ENCODE measurements at regions of chr1 and their contacts with region 1.

Region 1: DNA sequence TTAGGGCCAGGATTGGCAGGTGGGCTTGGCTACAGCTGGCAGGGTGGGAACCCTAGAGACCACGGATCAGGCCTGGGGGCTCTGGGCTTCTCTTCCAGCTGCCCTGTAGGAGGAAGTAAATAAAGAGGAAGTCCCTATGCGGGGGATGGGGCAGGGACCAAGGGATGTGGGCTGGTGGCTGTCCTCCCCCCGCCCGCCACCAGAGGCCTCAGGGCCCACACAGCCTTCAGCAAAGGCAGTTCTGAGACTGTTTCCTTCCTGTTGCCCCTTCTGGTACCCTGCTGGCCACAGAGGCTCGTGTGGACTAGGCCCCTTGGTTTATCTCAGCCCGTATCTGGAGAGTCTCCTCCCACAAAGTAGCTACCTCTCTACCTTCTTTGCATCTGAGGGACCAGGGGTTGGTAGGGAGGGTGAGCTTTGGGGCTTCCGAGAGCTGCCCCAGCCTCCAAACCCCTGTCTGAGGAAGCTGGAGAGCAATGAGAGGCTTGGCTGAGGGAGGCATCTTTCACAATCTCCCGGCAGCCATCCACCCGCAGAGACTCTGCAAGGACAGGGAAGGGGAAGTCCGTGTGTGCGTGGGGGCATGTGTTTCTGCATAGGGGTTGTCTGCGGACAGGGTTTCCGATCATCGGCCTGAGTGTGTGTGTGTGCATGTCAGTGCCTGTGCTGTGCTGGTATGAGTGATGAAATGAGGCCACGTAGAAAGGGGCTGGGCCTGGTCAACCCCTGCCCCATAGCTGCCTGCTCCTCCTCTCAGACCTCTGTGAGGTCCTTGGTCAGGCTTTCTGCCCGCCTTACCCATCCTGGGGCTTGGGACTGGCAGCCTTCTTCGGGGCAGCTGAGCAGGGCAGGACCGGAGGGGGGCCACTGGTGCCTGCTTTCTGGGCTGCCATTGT is 12.5 kb downstream of the RPS6KA1 start:
- DNase-seq: peak; percentile 73
- ATAC-seq: peak; percentile 93
- H3K4me3 Mint-ChIP-seq: no peak overlapping the region
- H3K27ac Mint-ChIP-seq: peak overlapping the region; percentile 40
- H3K4me1 Mint-ChIP-seq: peaks cover 26% of the 10 kb centered on the region
- H3K27me3 Mint-ChIP-seq: no peaks in the 10 kb centered on the region
- CTCF ChIP-seq: no peak

Region 2: GRCh38 chr1:26472901-26473845 is 68.9 kb before region 1 on chr1:
- CTCF ChIA-PET with region 1: interaction called, 12 read pairs
- POLR2A ChIA-PET with region 1: no interaction called
- DNase-seq: peak; percentile 96
- ATAC-seq: peak; percentile 59
- H3K4me3 Mint-ChIP-seq: peak overlapping the region; percentile 89
- H3K27ac Mint-ChIP-seq: peak overlapping the region; percentile 86
- H3K4me1 Mint-ChIP-seq: peaks cover 31% of the 10 kb centered on the region
- H3K27me3 Mint-ChIP-seq: no peaks in the 10 kb centered on the region; the same call in 1 of the 2 replicates
- CTCF ChIP-seq: no peak

Region 3: DNA sequence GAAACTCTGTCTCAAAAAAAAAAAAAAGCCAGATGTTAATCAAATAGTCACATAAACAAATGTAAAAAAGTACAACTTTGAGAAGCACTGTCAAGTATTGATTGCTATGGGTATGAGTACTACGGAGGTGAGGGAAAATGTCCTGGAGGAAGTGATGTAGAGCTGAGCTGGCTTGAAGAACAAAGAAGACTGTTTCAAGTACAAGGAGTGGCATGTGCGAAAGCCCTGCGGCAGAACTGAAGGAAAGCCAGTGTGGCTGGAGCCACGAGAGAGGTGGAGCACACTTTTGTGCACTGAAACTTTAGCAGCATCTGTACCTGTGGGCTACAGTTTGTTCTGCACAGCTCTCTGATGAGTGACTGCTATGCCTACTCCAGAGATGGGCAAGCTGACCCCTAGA is 17.9 kb before region 1 on chr1:
- CTCF ChIA-PET with region 1: interaction called, 85 read pairs
- POLR2A ChIA-PET with region 1: interaction called, 3 read pairs
- DNase-seq: no peak
- ATAC-seq: no peak
- H3K4me3 Mint-ChIP-seq: no peak overlapping the region
- H3K27ac Mint-ChIP-seq: no peak overlapping the region
- H3K4me1 Mint-ChIP-seq: peaks cover 12% of the 10 kb centered on the region
- H3K27me3 Mint-ChIP-seq: peaks cover 19% of the 10 kb centered on the region
- CTCF ChIP-seq: no peak

Region 4: DNA sequence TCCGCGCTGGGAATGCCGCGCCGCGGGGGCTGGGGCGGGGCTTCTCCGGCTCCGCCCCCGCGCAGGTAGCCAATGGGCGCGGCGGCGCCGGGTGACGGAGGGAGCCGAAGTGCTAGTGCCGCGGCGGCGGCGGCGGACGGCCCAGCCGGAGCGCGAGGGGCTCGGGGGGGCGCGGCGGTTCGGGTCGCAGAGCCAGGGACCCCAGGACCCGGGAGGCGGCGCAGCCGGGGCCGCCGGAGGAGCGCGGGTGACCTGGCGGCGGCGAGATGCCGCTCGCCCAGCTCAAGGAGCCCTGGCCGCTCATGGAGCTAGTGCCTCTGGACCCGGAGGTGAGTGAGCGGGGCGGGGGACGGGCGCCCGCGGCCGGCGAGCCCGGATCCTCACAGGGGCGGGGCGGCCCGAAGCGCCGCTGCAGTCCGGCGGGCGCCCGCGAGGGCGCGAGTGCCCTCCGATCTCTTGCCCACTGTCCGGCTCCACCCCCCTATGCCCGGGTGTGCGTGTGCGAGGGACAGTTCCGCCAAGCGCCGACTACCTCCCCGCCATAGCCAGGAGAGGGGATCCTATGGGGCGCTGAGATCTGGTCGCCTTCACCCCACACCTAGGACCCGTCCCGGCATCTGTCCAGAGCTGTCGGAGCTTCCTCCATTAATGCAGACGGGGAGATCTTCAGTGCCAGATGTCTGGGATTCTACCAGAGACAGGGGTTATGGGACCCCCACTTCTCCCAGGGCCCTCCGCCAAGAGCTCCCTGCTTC is 12.2 kb before region 1 on chr1 and contains the start of gene RPS6KA1:
- CTCF ChIA-PET with region 1: interaction called, 85 read pairs
- POLR2A ChIA-PET with region 1: interaction called, 5 read pairs
- DNase-seq: peak; percentile 78
- ATAC-seq: peak; percentile 52
- H3K4me3 Mint-ChIP-seq: peak within 1 kb of the TSS; percentile 91
- H3K27ac Mint-ChIP-seq: peak within 1 kb of the TSS; percentile 94
- H3K4me1 Mint-ChIP-seq: peaks cover 26% of the 10 kb centered on the region
- H3K27me3 Mint-ChIP-seq: peaks cover 10% of the 10 kb centered on the region
- CTCF ChIP-seq: no peak
- total RNA-seq, gene RPS6KA1: 55.6 to 65.5 TPM (median 57.7 TPM) in 3 replicates

Region 5: GRCh38 chr1:26582836-26583460 is 40.9 kb after region 1 on chr1:
- CTCF ChIA-PET with region 1: interaction called, 10 read pairs
- POLR2A ChIA-PET with region 1: no interaction called
- DNase-seq: no peak
- ATAC-seq: no peak
- H3K4me3 Mint-ChIP-seq: no peak overlapping the region
- H3K27ac Mint-ChIP-seq: no peak overlapping the region
- H3K4me1 Mint-ChIP-seq: no peaks in the 10 kb centered on the region
- H3K27me3 Mint-ChIP-seq: no peaks in the 10 kb centered on the region
- CTCF ChIP-seq: no peak

Region 6: GRCh38 chr1:26692793-26693490 is 150.9 kb after region 1 on chr1:
- CTCF ChIA-PET with region 1: interaction called, 10 read pairs
- POLR2A ChIA-PET with region 1: no interaction called
- DNase-seq: peak; percentile 93
- ATAC-seq: peak; percentile 65
- H3K4me3 Mint-ChIP-seq: peak overlapping the region; percentile 86
- H3K27ac Mint-ChIP-seq: peak overlapping the region; percentile 100
- H3K4me1 Mint-ChIP-seq: peaks cover 34% of the 10 kb centered on the region
- H3K27me3 Mint-ChIP-seq: no peaks in the 10 kb centered on the region
- CTCF ChIP-seq: no peak